ENCODE measurements at regions of chr3 and their contacts with region 1.

Region 1: DNA sequence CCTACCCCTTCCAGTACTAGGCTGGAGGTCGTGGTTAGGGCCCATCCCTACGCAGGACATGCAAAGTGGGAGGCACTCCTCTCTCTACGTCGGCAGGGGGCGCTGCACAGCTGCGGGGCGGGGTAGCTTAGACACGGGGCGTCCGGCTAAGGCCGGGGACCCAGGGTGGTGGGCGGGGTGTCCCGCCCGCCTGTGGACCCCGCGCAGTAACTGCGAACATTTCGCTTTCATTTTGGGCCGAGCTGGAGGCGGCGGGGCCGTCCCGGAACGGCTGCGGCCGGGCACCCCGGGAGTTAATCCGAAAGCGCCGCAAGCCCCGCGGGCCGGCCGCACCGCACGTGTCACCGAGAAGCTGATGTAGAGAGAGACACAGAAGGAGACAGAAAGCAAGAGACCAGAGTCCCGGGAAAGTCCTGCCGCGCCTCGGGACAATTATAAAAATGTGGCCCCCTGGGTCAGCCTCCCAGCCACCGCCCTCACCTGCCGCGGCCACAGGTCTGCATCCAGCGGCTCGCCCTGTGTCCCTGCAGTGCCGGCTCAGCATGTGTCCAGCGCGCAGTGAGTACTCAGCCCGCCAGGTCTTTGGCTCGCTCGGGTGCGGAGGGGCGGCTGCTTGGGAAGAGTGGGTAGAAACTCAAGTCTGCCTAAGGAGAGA is at the start of gene IL12A:
- DNase-seq: no peak
- H3K4me3 ChIP-seq: peak within 1 kb of the TSS; percentile 64
- H3K27me3 ChIP-seq: no peaks in the 10 kb centered on the region
- CTCF ChIP-seq: peak; percentile 98
- polyA plus RNA-seq, gene IL12A: 0.38 and 0.50 TPM in 2 replicates

Region 2: GRCh38 chr3:159884661-159885402 is 103.9 kb before region 1 on chr3:
- CTCF ChIA-PET with region 1: interaction called, 63 read pairs
- POLR2A ChIA-PET with region 1: no interaction called
- DNase-seq: no peak
- H3K4me3 ChIP-seq: no peak overlapping the region
- H3K27me3 ChIP-seq: no peaks in the 10 kb centered on the region
- CTCF ChIP-seq: peak; percentile 48

Region 3: DNA sequence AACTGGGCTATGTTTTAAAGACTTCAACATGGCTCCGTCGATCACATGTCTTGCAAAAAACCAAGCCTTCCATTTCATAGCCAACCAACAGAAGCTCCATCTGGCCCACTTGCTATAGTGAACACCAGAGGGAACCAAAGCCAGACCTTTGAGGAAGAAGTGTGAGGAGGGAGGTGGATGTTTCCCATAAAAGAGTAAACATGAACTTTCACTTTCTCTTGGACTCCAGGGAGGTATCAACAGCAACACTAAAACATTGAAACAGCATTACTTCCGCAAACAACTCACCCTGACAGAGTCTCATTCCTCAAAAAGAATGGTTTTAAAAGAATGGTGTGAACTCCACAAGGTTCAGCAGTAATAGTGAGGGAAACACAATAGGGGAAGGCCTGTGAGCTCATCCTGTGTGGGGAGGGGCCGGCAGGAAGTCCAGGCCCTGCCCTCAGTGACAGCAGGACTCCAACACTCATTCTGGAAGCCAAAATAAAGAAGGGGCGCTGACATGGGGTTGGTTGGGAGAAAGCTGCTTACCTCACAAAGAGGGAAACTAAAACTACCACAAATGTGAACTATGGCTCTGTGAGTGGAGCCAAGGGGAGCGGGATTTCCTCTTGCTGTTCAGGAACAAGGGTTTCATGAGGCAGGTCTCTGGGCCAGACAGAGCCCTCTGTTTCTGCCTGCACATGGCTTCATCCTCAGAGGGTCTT is 59.2 kb before region 1 on chr3:
- CTCF ChIA-PET with region 1: interaction called, 16 read pairs
- POLR2A ChIA-PET with region 1: no interaction called
- DNase-seq: no peak
- H3K4me3 ChIP-seq: no peak overlapping the region
- H3K27me3 ChIP-seq: no peaks in the 10 kb centered on the region
- CTCF ChIP-seq: peak; percentile 56

Region 4: DNA sequence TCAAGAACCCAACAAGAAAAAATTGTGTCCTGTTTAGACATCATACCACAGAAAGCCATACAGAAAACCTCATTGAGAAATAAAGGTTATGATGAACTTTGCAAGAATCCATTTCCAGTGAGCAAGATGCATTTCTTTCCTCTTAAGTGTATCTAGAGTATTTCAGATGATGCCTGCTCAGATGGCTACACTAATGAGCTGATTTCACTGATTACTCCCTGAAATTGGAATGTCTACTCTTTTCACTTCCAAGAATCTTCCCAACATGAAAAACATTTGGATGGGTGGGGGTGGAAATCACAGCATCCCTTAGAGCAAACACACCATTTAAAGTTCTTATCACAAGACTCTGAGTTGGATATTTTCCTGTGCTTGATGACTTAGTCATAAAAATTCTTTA is 41.5 kb before region 1 on chr3:
- CTCF ChIA-PET with region 1: interaction called, 11 read pairs
- POLR2A ChIA-PET with region 1: no interaction called
- DNase-seq: peak; percentile 95
- H3K4me3 ChIP-seq: no peak overlapping the region
- H3K27me3 ChIP-seq: no peaks in the 10 kb centered on the region
- CTCF ChIP-seq: no peak

Region 5: DNA sequence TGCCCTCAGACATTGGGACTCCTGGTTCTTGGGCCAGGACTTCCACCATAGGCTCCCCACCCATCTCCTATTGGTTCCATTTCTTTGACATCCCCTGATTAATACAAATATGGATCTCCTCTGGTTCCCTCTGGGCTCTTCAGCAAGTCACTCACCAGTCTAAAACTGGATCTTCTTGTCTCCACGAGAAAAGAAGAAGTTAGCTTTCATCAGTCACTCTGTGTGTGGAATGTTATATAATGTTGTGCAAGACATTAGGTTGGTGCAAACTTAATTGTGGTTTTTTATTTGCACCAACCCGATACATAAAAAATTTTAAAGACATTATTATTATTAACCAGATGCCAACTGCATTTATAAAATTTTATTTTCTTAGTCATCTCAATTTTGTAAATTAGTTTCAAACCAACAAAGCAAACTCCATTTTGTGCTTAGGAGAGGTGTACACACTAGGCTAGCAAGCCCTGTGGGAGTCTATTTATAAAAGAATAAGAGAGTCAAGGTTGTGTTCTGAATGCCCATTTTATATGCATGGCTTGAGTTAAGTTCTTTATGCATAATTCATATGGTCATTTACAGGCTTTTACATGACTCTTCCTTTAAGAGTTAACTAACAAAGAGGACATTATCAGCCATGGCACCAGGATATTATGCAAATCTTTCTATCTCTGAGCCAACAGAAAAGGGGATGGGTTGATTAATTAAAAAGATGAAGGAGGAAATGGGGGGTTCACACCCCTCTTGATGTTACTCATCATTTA is 35.2 kb before region 1 on chr3:
- CTCF ChIA-PET with region 1: interaction called, 12 read pairs
- POLR2A ChIA-PET with region 1: no interaction called
- DNase-seq: no peak
- H3K4me3 ChIP-seq: no peak overlapping the region
- H3K27me3 ChIP-seq: no peaks in the 10 kb centered on the region
- CTCF ChIP-seq: no peak

Region 6: GRCh38 chr3:159964166-159964973 is 24.4 kb before region 1 on chr3:
- CTCF ChIA-PET with region 1: interaction called, 22 read pairs
- POLR2A ChIA-PET with region 1: interaction called, 6 read pairs
- DNase-seq: no peak
- H3K4me3 ChIP-seq: no peak overlapping the region
- H3K27me3 ChIP-seq: no peaks in the 10 kb centered on the region
- CTCF ChIP-seq: no peak

Region 7: DNA sequence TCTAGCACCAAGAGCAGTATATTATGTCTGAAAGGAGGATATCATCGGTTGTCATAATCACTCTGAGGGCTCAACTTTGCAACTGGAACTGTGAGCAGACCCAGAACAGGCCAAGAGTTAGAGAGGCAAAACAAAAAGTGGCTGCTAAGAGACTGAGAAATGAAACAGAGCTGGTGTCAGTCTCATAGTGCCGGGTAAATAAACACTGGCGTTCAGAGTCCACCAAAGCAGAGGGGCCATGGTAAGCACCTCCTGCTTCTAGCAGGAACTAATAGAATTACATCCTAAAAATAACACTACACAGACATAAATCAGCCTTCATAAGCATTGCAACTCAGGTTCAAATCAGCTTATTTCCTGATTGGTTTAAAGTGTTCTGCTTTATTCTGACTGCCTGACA is 10.4 kb before region 1 on chr3:
- CTCF ChIA-PET with region 1: interaction called, 53 read pairs
- POLR2A ChIA-PET with region 1: no interaction called
- DNase-seq: no peak
- H3K4me3 ChIP-seq: no peak overlapping the region
- H3K27me3 ChIP-seq: no peaks in the 10 kb centered on the region
- CTCF ChIP-seq: no peak

Measured in BJ (cell line).